Lower leg skin (tissue), 4 donors: ENCODE measurements at regions of chr22 and their contacts with region 1.

Region 1: DNA sequence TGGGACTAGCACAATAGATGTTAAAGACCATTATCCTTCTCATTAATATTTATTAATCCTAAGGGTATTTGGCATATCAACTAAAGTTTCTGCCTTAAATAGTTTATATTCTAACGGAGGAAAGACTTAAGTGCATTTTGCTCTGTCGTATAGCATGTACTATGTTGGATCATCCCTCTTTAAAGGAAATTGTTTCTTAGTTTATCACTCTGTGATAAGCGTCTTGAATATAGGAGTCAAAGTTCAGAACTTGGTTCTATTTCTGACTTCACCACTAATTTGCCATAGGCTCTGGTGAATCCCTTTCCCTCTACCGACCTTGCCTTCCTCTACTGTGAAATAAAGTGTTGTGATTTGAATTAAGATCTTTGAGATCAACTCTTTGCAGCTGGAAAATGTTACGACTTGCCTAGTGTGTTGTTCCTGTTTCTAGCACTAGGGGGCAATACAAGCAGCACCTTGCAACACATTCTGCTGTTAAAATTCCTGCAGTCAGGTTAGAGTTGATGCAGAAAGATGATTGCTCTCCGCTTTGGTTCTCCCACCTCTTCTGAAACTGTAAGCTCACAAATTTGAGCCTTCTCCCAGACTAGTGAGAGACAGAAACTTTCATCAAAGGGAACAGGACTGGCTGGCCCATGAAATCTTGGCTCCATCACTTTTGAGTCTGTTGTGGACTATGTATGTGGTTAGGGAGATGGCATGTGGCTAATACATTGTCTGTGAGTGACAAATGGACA is 27.8 kb upstream of the ZNRF3 start:
- DNase-seq: peak in 1 of 2 donors; percentile 47
- H3K4me3 ChIP-seq: no peak overlapping the region
- CTCF ChIP-seq: peak in 1 of 3 donors; percentile 93
- POLR2A ChIP-seq: no peak

Region 2: GRCh38 chr22:29245637-29246385 is 390.3 kb after region 1 on chr22:
- intact Hi-C with region 1: loop called (anchors 10 kb)
- DNase-seq: peak; percentile 60 to 96
- H3K4me3 ChIP-seq: no peak overlapping the region
- CTCF ChIP-seq: peak in 1 of 3 donors; percentile 88
- POLR2A ChIP-seq: no peak